ENCODE measurements at regions of chr18 and their contacts with region 1.

Region 1: DNA sequence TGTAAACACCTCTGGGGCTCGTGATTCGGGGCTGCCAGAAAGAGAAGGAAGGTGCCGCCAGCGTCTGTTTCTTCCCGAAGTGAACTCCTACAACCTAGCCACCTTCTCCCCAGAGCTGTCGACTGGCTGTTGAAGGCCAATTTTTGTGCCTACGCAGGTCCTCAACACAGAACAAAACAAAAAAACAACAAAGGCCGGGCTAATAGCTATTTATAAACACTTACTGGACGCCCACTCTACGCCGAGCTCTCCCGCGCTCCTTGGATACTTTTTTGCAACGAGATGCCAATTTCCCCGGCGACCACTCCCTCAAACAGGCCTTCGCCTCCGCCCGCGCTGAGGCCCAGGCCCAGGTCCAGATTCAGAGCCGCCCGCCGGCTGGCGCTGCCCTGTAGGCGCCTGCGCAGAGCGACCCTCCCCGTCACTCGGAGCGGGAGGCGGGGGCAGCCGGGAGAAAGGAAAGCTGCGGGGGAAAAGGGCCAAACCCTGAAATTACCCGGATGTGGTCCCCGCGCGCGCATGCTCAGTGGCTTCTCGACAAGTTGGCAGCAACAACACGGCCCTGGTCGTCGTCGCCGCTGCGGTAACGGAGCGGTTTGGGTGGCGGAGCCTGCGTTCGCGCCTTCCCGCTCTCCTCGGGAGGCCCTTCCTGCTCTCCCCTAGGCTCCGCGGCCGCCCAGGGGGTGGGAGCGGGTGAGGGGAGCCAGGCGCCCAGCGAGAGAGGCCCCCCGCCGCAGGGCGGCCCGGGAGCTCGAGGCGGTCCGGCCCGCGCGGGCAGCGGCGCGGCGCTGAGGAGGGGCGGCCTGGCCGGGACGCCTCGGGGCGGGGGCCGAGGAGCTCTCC is at the start of gene SMAD4:
- DNase-seq: peak; percentile 94
- ATAC-seq: peak; percentile 95
- H3K4me3 ChIP-seq: peak within 1 kb of the TSS; percentile 78
- H3K27ac ChIP-seq: peak within 1 kb of the TSS; percentile 96
- H3K4me1 ChIP-seq: peaks cover 5% of the 10 kb centered on the region
- H3K27me3 ChIP-seq: no peaks in the 10 kb centered on the region
- CTCF ChIP-seq: no peak
- POLR2A ChIP-seq: peak; percentile 90
- RAD21 ChIP-seq: no peak
- total RNA-seq, gene SMAD4: 145 and 194 TPM in 2 replicates

Region 2: DNA sequence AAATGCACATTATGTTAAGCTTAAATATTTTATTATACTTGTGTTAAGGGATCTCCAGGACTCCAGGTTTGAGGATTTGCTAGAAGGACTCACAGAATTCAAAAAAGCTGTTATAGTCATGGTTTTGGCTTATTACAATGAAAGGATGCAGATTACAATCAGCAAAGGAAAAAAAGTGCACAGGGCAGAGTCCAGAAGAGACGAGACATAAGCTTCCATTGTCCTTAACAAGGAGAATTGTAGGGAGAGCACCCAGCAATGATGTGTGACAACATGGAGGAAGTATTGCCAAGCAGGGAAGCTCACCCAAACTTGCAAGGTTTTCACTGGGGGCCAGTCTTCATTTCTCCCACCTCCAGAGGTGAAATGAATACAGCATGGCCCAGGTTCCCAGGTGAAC is 822.2 kb before region 1 on chr18:
- CTCF ChIA-PET with region 1: no interaction called
- POLR2A ChIA-PET with region 1: no interaction called
- dilution Hi-C with region 1: no loop called
- in situ Hi-C with region 1: no loop called
- intact Hi-C with region 1: no loop called
- DNase-seq: no peak
- ATAC-seq: no peak
- H3K4me3 ChIP-seq: no peak overlapping the region
- H3K27ac ChIP-seq: no peak overlapping the region
- H3K4me1 ChIP-seq: no peaks in the 10 kb centered on the region; the same call in 1 of the 2 replicates
- H3K27me3 ChIP-seq: peaks cover 7% of the 10 kb centered on the region; the same call in 1 of the 2 replicates
- CTCF ChIP-seq: no peak
- POLR2A ChIP-seq: no peak
- RAD21 ChIP-seq: no peak

Region 3: DNA sequence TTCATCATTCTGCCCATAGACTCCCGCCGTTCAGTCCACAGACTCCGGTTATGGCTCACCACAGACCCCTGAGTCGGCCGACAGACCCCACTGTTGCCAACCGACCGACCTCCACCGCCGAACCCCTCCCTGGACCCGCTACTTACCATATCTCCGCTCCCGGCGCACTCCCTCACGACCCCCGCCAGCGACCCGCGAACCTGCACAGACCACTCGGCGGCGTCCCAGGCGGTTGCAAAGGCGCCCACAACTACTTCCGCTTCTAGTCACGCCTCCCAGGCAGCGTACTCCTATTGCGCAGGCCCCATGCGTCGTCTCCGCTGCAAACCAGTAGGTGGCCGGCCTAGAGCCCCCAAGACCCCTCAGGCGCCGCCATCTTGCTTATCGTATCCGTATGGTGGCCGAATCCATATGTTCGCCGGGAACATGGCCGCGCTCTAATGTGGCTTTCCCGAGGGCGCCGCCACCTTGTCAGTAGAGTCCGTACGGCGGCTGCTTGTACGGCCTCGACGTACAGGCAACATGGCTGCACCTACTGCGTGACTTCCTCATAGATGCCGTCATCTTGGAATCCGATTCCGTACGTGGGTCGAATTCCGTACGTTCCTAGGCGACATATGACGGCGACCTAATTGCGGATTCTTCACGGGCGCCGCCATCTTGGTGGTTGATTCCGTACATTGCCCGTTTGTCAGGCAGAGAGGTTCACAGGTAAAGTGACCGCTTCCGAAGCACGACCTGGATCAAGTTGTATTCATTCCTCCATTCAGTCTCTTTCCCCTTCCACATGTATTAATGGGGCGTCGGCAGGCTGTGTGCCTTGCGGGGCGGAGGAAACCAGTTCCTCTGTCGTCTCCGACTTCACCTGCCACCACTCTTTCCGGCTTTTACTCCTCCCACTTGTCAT is 742.2 kb before region 1 on chr18 and contains the start of gene CXXC1:
- CTCF ChIA-PET with region 1: no interaction called
- POLR2A ChIA-PET with region 1: no interaction called
- dilution Hi-C with region 1: no loop called
- in situ Hi-C with region 1: loop called (anchors 25 kb)
- intact Hi-C with region 1: no loop called
- DNase-seq: peak; percentile 100
- ATAC-seq: peak; percentile 96
- H3K4me3 ChIP-seq: peak within 1 kb of the TSS; percentile 60
- H3K27ac ChIP-seq: peak within 1 kb of the TSS; percentile 33
- H3K4me1 ChIP-seq: peaks cover 3% of the 10 kb centered on the region; the same call in 1 of the 2 replicates
- H3K27me3 ChIP-seq: peaks cover 5% of the 10 kb centered on the region; the same call in 1 of the 2 replicates
- CTCF ChIP-seq: peak; percentile 56
- POLR2A ChIP-seq: no peak
- RAD21 ChIP-seq: no peak
- total RNA-seq, gene CXXC1: 24.0 and 29.4 TPM in 2 replicates

Region 4: GRCh38 chr18:50751490-50751889 is 278.4 kb before region 1 on chr18:
- CTCF ChIA-PET with region 1: no interaction called
- POLR2A ChIA-PET with region 1: no interaction called
- dilution Hi-C with region 1: no loop called
- in situ Hi-C with region 1: no loop called
- intact Hi-C with region 1: no loop called
- DNase-seq: no peak
- ATAC-seq: no peak
- H3K4me3 ChIP-seq: no peak overlapping the region
- H3K27ac ChIP-seq: no peak overlapping the region
- H3K4me1 ChIP-seq: no peaks in the 10 kb centered on the region
- H3K27me3 ChIP-seq: no peaks in the 10 kb centered on the region
- CTCF ChIP-seq: no peak
- POLR2A ChIP-seq: no peak
- RAD21 ChIP-seq: no peak

Region 5: GRCh38 chr18:50878345-50879301 is 151.3 kb before region 1 on chr18 and contains the start of gene ME2:
- CTCF ChIA-PET with region 1: no interaction called
- POLR2A ChIA-PET with region 1: no interaction called
- dilution Hi-C with region 1: no loop called
- in situ Hi-C with region 1: no loop called
- intact Hi-C with region 1: loop called (anchors 5 kb)
- DNase-seq: peak; percentile 86
- ATAC-seq: peak; percentile 97
- H3K4me3 ChIP-seq: peak within 1 kb of the TSS; percentile 86
- H3K27ac ChIP-seq: peak within 1 kb of the TSS; percentile 86
- H3K4me1 ChIP-seq: no peaks in the 10 kb centered on the region
- H3K27me3 ChIP-seq: no peaks in the 10 kb centered on the region
- CTCF ChIP-seq: no peak
- POLR2A ChIP-seq: peak; percentile 75
- RAD21 ChIP-seq: no peak
- total RNA-seq, gene ME2: 32.6 and 50.0 TPM in 2 replicates

Region 6: GRCh38 chr18:50967714-50968661 is 61.9 kb before region 1 on chr18 and contains the start of gene ELAC1:
- CTCF ChIA-PET with region 1: no interaction called
- POLR2A ChIA-PET with region 1: no interaction called
- dilution Hi-C with region 1: no loop called
- in situ Hi-C with region 1: loop called (anchors 5 kb)
- intact Hi-C with region 1: loop called (anchors 2 kb)
- DNase-seq: peak; percentile 76
- ATAC-seq: peak; percentile 97
- H3K4me3 ChIP-seq: peak within 1 kb of the TSS; percentile 61
- H3K27ac ChIP-seq: peak within 1 kb of the TSS; percentile 83
- H3K4me1 ChIP-seq: peaks cover 3% of the 10 kb centered on the region; the same call in 1 of the 2 replicates
- H3K27me3 ChIP-seq: no peaks in the 10 kb centered on the region
- CTCF ChIP-seq: 0 out of 2 replicates have a peak, but pooled peaks have one; percentile 0
- POLR2A ChIP-seq: peak; percentile 92
- RAD21 ChIP-seq: no peak
- total RNA-seq, gene ELAC1: 5.2 and 6.4 TPM in 2 replicates

Region 7: DNA sequence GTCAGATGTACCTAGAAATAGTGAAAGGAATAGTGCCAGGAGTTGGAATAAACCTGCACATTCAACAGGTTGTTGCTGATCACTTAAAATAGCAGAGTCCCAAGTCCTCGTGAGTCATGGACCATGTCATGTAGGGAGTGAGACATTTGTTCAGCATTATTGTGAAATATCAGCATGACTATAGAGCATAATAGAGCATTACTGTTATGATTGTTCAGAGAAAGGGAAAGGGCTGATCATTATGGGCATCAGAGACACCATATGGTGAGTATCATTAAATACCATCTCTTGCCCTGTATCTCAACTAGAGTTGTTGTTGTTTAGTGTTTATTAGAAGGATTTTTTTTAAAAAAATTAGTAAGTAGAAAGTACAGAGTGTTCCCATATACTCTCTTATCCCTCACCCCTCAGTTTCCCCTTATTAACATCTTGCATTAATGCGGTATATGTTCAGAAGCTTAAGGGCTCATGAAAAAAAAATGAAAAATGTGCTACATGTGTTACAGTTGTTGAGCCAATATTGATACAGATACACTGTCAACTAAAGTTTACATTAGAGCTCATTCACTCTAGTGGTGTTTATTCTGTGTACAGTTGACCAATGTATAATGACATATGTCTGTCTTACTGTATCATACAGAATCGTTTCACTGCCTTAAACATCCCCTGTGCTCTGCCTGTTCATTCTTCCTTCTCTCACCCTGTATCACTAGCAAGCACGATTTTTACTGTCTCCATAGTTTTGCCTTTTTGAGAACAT is 56.4 kb before region 1 on chr18:
- CTCF ChIA-PET with region 1: no interaction called
- POLR2A ChIA-PET with region 1: no interaction called
- dilution Hi-C with region 1: no loop called
- in situ Hi-C with region 1: loop called (anchors 5 kb)
- intact Hi-C with region 1: loop called (anchors 2 kb)
- DNase-seq: peak; percentile 79
- ATAC-seq: peak; percentile 59
- H3K4me3 ChIP-seq: no peak overlapping the region
- H3K27ac ChIP-seq: no peak overlapping the region
- H3K4me1 ChIP-seq: peaks cover 3% of the 10 kb centered on the region; the same call in 1 of the 2 replicates
- H3K27me3 ChIP-seq: no peaks in the 10 kb centered on the region
- CTCF ChIP-seq: no peak
- POLR2A ChIP-seq: no peak
- RAD21 ChIP-seq: no peak

Region 8: DNA sequence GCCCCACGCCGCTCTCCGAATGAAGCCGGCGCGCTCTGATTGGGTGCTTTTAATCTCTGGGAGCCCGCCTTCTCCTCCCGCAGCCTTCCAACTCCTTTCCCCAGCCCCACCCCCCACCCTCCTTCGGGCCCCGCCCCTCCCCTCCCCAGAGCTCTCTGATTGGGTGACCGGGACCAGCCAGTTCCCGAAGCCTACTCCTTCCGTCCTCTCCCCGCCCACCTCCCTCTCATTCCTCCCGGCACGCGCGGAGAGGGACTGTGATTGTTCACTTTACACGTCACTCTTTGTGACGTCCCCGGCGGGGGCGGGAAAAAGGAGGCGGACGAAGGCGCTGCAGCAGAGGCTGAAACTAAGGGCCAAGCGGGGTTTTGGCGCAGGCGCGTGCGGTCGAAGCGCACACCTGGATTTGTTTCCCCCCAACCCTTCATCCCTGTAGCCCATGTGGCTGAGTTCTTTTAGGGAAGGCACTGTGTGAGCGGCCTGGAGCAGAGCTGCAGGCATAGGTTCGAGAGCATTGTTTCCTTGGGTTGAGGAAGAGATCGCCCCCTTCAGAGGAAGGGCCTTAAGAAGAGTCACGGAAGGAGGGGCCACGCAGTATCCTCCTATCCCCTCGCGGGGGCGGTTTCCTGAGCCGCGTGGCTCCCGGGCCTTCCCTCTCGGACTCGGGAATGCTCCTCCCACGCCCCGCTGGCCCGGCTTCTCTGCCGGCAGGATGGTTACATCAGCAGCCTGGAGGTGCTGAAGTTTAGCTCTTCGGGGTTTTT is 167.9 kb after region 1 on chr18 and contains the start of gene MEX3C:
- CTCF ChIA-PET with region 1: no interaction called
- POLR2A ChIA-PET with region 1: no interaction called
- dilution Hi-C with region 1: no loop called
- in situ Hi-C with region 1: no loop called
- intact Hi-C with region 1: loop called (anchors 5 kb)
- DNase-seq: peak; percentile 99
- ATAC-seq: peak; percentile 88
- H3K4me3 ChIP-seq: peak within 1 kb of the TSS; percentile 98
- H3K27ac ChIP-seq: peak within 1 kb of the TSS; percentile 90
- H3K4me1 ChIP-seq: peaks cover 2% of the 10 kb centered on the region; the same call in 1 of the 2 replicates
- H3K27me3 ChIP-seq: no peaks in the 10 kb centered on the region
- CTCF ChIP-seq: 0 out of 2 replicates have a peak, but pooled peaks have one; percentile 10
- POLR2A ChIP-seq: no peak
- RAD21 ChIP-seq: no peak
- total RNA-seq, gene MEX3C: 42.8 and 50.9 TPM in 2 replicates